Adrenal gland (tissue), 19 donors: ENCODE measurements at regions of chr1 and their contacts with region 1.

Region 1: DNA sequence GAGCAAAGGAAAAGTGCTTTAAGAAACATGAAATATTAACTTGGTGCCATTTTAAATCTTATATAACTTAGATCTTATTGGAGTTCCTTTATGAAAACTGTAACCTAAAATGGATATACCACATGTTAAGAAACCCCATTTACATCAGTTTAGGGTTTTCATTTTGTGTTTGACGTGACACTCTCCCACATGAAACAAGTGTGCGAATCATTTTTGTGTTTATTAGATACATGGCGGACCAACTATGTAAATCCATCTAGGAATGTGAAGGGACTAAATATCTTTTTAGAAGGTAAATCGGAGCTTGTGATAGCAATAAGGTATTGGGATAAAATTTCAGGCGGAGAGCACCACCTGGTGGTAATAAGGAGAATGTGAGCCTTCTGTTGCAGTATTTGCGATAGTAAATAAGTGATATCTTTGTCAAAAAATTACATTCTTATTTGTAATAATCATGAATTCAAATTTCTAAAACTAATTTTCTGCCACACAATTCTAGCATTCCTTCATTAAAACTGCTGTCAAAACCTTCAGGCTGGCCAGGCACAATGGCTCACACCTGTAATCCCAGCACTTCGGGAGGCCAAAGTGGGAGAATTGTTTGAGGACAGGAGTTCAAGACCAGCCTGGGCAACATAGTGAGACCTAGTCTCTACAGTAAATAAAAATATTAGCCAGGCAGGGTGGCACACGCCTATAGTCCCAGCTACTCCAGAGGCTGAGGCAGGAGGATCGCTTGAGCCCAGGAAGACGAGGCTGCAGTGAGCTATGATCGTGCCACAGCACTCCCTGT is 31.3 kb downstream of the SMAP2 start:
- DNase-seq: peak in 1 of 7 donors; percentile 50
- H3K4me3 ChIP-seq: no peak overlapping the region
- H3K27ac ChIP-seq: no peak overlapping the region
- H3K4me1 ChIP-seq: peaks cover 0 to 11% of the 10 kb centered on the region in 2 donors
- H3K27me3 ChIP-seq: no peaks in the 10 kb centered on the region
- CTCF ChIP-seq: peak; percentile 77 to 91 (median 84)
- POLR2A ChIP-seq: no peak

Region 2: DNA sequence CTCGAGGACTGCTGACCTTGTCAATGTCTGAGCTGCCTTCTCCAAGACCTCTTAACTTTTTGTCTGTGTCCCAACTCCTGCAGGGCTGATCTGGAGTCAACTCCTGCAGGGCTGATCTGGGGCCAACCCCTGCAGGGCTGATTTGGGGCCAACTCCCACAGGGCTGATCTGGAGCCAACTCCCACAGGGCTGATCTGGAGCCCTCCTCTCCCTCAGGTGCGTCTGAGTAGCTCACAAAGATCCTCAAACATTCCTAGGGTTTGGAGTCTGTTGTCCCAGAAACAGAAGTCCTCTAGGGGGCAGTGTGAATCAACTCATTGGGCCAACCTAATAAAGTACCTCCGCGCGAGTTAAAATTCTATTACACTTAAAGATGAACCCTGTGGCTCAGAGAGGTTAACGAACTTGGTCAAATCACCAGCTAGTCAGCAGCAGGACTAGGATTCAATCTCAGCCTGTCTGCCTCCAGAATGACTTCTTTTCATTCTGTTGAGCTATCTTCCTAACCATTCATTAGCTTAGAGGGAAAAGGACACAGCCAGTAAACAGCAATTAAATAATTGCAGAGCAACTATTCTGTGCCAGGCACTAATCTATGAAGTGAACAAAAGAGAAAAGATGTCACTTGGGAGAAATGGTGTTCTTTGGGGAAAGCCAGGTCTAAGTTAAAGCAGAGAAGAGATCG is 260.8 kb before region 1 on chr1:
- intact Hi-C with region 1: loop called (anchors 5 to 10 kb)
- DNase-seq: peak; percentile 50 to 76 (median 66)
- H3K4me3 ChIP-seq: no peak overlapping the region
- H3K27ac ChIP-seq: no peak overlapping the region
- H3K4me1 ChIP-seq: no peaks in the 10 kb centered on the region
- H3K27me3 ChIP-seq: peaks cover 4% of the 10 kb centered on the region
- CTCF ChIP-seq: peak; percentile 68 to 83 (median 74)
- POLR2A ChIP-seq: no peak

Region 3: GRCh38 chr1:40153073-40153770 is 251.6 kb before region 1 on chr1:
- intact Hi-C with region 1: loop called (anchors 5 to 10 kb)
- DNase-seq: peak in 2 of 7 donors; percentile 27 to 44
- H3K4me3 ChIP-seq: no peak overlapping the region
- H3K27ac ChIP-seq: no peak overlapping the region
- H3K4me1 ChIP-seq: no peaks in the 10 kb centered on the region
- H3K27me3 ChIP-seq: no peaks in the 10 kb centered on the region
- CTCF ChIP-seq: peak; percentile 33 to 76 (median 66)
- POLR2A ChIP-seq: no peak

Region 4: GRCh38 chr1:40344597-40344996 is 60.3 kb before region 1 on chr1:
- intact Hi-C with region 1: loop called in 1 of 2 experiments (anchors 5 kb)
- DNase-seq: peak in 6 of 7 donors; percentile 49 to 72 (median 56)
- H3K4me3 ChIP-seq: no peak overlapping the region
- H3K27ac ChIP-seq: peak overlapping the region in 1 of 5 donors; percentile 44
- H3K4me1 ChIP-seq: no peaks in the 10 kb centered on the region
- H3K27me3 ChIP-seq: no peaks in the 10 kb centered on the region
- CTCF ChIP-seq: no peak
- POLR2A ChIP-seq: no peak

Region 5: GRCh38 chr1:40469327-40469726 is 64.5 kb after region 1 on chr1:
- intact Hi-C with region 1: no loop called
- DNase-seq: no peak
- H3K4me3 ChIP-seq: no peak overlapping the region
- H3K27ac ChIP-seq: no peak overlapping the region
- H3K4me1 ChIP-seq: no peaks in the 10 kb centered on the region
- H3K27me3 ChIP-seq: no peaks in the 10 kb centered on the region
- CTCF ChIP-seq: no peak
- POLR2A ChIP-seq: no peak